ENCODE measurements at regions of chr13 and their contacts with region 1.

Region 1: DNA sequence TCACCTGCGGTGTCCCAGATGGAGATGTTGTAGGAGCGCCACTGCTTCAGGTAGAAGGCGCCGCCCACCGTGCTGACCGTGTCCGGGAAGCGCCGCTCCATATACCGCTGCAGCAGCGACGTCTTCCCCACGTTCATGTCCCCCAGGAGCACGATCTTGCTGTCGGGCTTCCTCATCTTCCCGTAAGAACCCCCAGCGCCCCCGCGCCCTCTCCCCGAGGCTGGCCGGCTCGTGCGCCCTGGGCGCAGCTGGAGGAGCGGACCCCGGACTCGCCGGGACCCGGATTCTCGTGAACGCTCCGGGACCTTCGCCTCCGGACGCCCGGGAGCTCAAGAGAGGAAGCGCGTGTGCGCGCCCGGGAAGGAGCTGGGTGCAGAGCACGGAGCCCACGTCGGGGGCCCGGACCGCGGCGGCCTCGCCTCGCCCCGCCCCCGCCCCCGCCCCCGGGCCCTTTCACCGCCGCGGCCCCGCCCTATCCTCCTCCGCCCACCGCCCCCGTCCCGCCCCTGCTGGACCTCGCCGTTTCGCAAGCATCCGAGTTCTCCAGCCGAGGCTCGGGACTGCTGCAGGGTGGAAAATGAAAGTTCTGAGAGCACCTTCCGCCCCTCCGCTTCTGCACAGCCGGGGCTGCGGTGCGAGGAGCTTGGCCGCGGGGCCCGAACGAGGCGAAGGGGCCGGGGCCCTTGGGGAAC is at the start of gene RAB20:
- H3K4me3 Mint-ChIP-seq: peak within 1 kb of the TSS; percentile 88
- H3K27ac Mint-ChIP-seq: peak within 1 kb of the TSS; percentile 86
- H3K4me1 Mint-ChIP-seq: peaks cover 67% of the 10 kb centered on the region
- H3K27me3 Mint-ChIP-seq: peaks cover 3% of the 10 kb centered on the region

Region 2: GRCh38 chr13:110455941-110456340 is 105.5 kb before region 1 on chr13:
- intact Hi-C with region 1: loop called (anchors 5 kb)
- H3K4me3 Mint-ChIP-seq: peak overlapping the region; percentile 33
- H3K27ac Mint-ChIP-seq: no peak overlapping the region
- H3K4me1 Mint-ChIP-seq: peaks cover 11% of the 10 kb centered on the region
- H3K27me3 Mint-ChIP-seq: peaks cover 37% of the 10 kb centered on the region

Region 3: DNA sequence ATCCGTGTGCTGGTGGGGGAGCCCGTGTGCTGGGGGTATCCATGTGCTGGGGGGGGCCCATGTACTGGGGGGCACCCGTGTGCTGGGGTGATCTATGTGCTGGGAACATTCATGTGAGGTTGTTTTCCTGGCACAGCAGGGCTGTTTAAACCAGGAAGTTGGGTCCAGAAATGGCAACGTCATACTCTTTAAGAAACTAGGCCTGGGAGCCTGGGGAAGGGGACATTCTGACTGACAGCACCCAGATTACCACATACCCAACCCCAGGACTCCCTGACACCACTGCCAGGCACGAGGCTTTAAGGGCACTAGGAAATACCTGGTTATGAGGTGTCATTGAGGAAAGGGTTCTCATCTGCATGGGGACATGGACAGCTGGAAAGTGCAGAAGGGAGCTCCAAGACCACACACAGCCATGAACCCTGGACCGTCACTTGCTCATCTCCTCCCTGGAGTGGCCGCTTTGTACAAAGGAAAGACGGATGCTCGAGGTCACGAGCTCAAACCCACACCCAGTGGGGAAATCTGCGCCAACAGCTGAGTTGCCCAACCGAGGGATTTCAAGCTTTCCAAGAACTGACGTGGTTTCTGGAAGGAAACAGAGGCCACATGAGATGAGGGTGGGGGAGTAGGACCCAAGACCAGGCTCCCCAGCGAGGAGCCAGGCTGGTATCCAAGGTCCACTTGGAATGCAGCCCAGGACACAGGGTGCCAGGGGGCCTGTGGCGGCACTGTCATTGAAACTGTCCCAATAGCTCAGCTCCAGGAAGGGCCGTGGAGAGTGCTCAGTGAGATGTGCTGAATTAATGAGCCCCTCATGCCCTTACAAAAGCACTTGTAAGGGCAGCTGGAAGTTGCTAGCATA is 40.8 kb before region 1 on chr13:
- intact Hi-C with region 1: loop called (anchors 5 kb)
- H3K4me3 Mint-ChIP-seq: peak overlapping the region; percentile 42
- H3K27ac Mint-ChIP-seq: peak overlapping the region; percentile 94
- H3K4me1 Mint-ChIP-seq: peaks cover 82% of the 10 kb centered on the region
- H3K27me3 Mint-ChIP-seq: peaks cover 6% of the 10 kb centered on the region

Region 4: DNA sequence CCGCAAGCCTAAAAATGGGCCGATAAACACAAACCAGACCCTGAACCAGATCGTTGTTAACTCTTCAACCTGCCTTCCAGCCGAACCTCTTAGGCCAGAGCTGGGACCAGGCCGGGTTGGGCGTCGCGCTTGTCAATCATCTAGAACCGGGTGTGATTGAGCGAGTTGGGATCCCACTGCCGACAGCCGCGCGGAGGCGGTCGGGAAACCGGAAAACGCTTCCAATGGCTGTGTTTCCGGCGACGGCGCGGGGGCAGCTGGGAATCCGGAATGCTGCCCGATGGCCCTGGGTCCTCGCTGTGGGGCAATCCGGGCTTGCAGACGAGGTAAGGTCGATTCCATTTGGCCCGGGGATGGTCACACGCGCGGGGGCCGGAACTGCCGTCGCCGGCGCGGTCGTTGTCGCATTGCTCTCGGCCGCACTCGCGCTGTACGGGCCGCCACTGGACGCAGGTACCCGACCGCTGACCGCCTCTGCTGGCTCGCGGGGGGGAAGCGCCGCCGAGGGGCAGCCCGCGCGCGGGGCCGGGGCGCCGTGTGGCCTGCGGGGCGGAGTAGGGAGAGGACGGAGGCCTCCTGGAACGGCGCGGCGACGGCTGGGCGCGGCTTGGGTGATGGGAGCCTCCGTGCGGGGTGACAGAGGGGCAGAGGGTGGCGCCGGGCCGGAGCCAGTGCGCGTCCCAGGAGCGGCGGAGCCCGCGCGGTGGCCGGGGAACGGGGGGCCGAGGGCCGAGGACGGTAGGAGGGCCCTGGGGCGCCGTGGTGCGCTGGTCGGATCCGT is 54.0 kb after region 1 on chr13 and contains the start of gene NAXD:
- intact Hi-C with region 1: loop called (anchors 2 kb)
- H3K4me3 Mint-ChIP-seq: peak within 1 kb of the TSS; percentile 82
- H3K27ac Mint-ChIP-seq: peak within 1 kb of the TSS; percentile 83
- H3K4me1 Mint-ChIP-seq: peaks cover 22% of the 10 kb centered on the region
- H3K27me3 Mint-ChIP-seq: peaks cover 4% of the 10 kb centered on the region

Region 5: DNA sequence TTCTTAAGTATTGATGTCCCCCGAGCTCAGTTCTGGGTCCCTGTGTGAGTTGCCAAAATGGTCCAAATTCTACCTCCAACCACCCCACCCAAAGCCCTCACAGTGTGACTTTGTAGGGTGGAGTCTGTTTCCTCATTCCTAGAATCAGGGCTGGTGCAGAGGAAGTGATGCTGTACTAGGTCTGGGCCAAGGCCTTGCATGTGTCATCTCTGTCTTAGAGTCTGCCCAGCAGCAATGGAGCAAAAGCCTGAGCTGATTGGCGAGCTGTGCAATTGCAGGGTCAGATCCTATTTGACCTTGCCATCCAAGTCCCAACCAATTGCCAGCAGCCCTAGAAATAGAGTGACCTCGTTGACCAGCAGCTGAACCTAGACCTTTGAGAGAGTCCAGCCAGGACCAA is 450.4 kb after region 1 on chr13:
- intact Hi-C with region 1: no loop called
- H3K4me3 Mint-ChIP-seq: no peak overlapping the region
- H3K27ac Mint-ChIP-seq: peak overlapping the region; percentile 52
- H3K4me1 Mint-ChIP-seq: peaks cover 6% of the 10 kb centered on the region
- H3K27me3 Mint-ChIP-seq: peaks cover 5% of the 10 kb centered on the region

Measured in dendritic cell treated with granulocyte-macrophage colony-stimulating factor and Interleukin-4, amounts not matched to agents 40 ng/mL and 50 ng/mL, for 4 days (primary cell).